PC-3 (cell line): ENCODE measurements at regions of chr5 and their contacts with region 1.

Region 1: GRCh38 chr5:157026789-157027424 is 32.0 kb downstream of the HAVCR1 start:
- DNase-seq: peak; percentile 85
- ATAC-seq: peak; percentile 47
- H3K4me3 ChIP-seq: no peak overlapping the region
- H3K27ac ChIP-seq: no peak overlapping the region
- H3K4me1 ChIP-seq: peaks cover 30% of the 10 kb centered on the region
- H3K27me3 ChIP-seq: peaks cover 31% of the 10 kb centered on the region
- CTCF ChIP-seq: peak; percentile 88

Region 2: GRCh38 chr5:156835905-156836304 is 191.0 kb before region 1 on chr5:
- CTCF ChIA-PET with region 1: no interaction called
- POLR2A ChIA-PET with region 1: no interaction called
- intact Hi-C with region 1: loop called (anchors 2 kb)
- DNase-seq: peak; percentile 50
- ATAC-seq: peak; percentile 43; the same call in 1 of the 2 replicates
- H3K4me3 ChIP-seq: no peak overlapping the region
- H3K27ac ChIP-seq: no peak overlapping the region
- H3K4me1 ChIP-seq: no peaks in the 10 kb centered on the region
- H3K27me3 ChIP-seq: peaks cover 24% of the 10 kb centered on the region
- CTCF ChIP-seq: peak; percentile 60

Region 3: GRCh38 chr5:156893517-156893916 is 133.4 kb before region 1 on chr5:
- CTCF ChIA-PET with region 1: no interaction called
- POLR2A ChIA-PET with region 1: no interaction called
- intact Hi-C with region 1: loop called (anchors 10 kb)
- DNase-seq: no peak
- ATAC-seq: no peak
- H3K4me3 ChIP-seq: no peak overlapping the region
- H3K27ac ChIP-seq: no peak overlapping the region
- H3K4me1 ChIP-seq: no peaks in the 10 kb centered on the region
- H3K27me3 ChIP-seq: peaks cover 23% of the 10 kb centered on the region
- CTCF ChIP-seq: no peak